OCI-LY7 (cell line): ENCODE measurements at regions of chr9 and their contacts with region 1.

Region 1: GRCh38 chr9:32550562-32551433 is 1.3 kb upstream of the SMIM27 start:
- DNase-seq: peak; percentile 95
- H3K4me3 ChIP-seq: peak overlapping the region; percentile 82
- H3K27ac ChIP-seq: peak overlapping the region; percentile 89
- H3K4me1 ChIP-seq: peaks cover 21% of the 10 kb centered on the region
- CTCF ChIP-seq: peak; percentile 34; the same call in 1 of the 2 replicates

Region 2: GRCh38 chr9:32603914-32604741 is 53.3 kb after region 1 on chr9:
- CTCF ChIA-PET with region 1: no interaction called
- POLR2A ChIA-PET with region 1: interaction called, 6 read pairs
- intact Hi-C with region 1: loop called (anchors 2 kb)
- DNase-seq: peak; percentile 85
- H3K4me3 ChIP-seq: peak overlapping the region; percentile 50
- H3K27ac ChIP-seq: peak overlapping the region; percentile 64
- H3K4me1 ChIP-seq: peaks cover 46% of the 10 kb centered on the region
- CTCF ChIP-seq: no peak